ENCODE measurements at regions of chr10 and their contacts with region 1.

Region 1: DNA sequence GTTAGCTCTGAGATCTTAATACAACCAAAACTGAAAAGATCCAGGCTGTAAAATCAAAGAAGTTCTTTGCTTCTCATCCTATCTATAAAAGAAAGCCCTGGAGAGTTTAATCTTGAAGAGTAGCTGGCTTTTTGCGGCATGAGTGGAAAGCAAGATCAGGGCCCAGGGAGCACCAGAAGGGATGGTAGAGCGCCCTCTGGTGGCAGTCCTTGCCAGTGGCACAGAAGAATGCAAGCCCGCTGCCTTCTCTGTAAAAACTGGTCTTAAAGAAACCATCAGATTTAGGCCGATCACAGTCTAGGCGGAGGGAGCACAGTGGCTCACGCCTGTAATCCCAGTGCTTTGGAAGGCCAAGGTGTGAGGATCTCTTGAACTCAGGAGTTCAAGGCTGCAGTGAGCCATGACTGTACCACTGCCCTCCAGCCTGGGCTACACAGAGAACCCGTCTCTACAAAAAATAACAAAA is 35.6 kb downstream of the CPN1 start:
- DNase-seq: peak; percentile 94
- H3K4me3 ChIP-seq: no peak overlapping the region
- H3K27ac ChIP-seq: no peak overlapping the region
- H3K4me1 ChIP-seq: peaks cover 12% of the 10 kb centered on the region
- H3K27me3 ChIP-seq: no peaks in the 10 kb centered on the region
- CTCF ChIP-seq: peak; percentile 85 to 95 (median 91)
- POLR2A ChIP-seq: no peak

Region 2: DNA sequence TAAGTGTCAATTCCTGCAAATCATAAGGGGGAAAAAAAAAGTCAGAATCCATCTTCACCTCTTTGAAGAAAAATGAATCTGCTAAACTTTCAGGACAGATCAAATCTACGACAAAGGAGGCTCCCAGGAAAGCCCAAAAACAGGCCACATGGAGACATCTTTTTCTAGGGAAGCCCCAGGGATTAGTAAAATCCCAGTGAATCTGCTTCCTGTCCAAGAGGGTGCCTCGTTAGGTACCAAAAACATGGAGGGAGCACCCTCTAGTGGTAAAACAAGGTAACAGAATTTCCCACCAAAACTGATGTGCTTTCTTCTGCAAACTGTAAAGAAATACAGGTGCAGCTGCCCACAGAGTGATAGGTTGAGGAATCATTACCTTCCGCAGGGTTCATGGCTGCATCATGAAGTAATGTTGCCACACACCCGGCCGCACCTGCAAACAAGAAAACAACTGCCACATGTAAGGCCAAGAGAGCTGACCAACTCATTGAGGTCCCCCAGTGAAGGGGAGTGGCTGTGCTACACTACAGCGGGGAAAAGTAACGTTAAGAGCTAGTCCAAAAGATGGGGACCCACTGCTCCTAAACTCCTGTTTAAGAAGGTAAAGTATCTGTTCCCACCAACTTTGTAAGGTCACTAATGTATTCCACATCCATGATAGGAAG is 433.8 kb before region 1 on chr10:
- intact Hi-C with region 1: no loop called
- DNase-seq: peak; percentile 26
- H3K4me3 ChIP-seq: no peak overlapping the region
- H3K27ac ChIP-seq: no peak overlapping the region
- H3K4me1 ChIP-seq: peaks cover 3% of the 10 kb centered on the region
- H3K27me3 ChIP-seq: no peaks in the 10 kb centered on the region
- CTCF ChIP-seq: peak; percentile 48 to 79 (median 74)
- POLR2A ChIP-seq: no peak

Region 3: DNA sequence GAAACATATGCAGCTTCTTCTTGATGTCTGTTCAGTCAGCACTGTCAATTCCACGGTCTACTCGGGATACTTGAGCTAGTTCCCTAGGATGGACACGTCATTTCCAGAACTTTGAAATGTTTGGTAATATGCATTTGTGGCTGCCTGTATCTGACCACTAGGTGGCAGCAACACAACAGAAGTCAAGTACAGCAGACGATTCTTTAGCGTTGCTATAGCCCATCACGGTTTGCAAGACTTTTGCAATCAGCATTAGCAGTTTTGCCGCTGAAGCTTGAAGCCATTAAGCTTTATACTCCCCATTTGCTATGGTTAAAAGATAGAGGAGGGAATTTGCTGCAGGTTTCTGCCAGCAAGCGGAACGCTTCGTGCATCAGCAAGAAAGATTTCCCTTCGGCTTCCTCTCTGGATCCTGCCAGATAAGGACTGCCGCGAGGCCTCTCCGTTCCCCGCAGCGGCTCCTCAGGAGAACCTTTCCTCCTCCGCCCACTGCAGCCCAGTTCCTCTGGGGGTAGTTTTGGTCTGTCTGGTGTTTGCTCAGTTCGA is 200.1 kb before region 1 on chr10:
- intact Hi-C with region 1: loop called (anchors 10 kb)
- DNase-seq: peak; percentile 92
- H3K4me3 ChIP-seq: peak overlapping the region; percentile 19 to 49
- H3K27ac ChIP-seq: no peak overlapping the region
- H3K4me1 ChIP-seq: peaks cover 8% of the 10 kb centered on the region
- H3K27me3 ChIP-seq: no peaks in the 10 kb centered on the region
- CTCF ChIP-seq: peak; percentile 94 to 97 (median 96)
- POLR2A ChIP-seq: no peak

Measured in testis (tissue), 5 donors.